ENCODE measurements at regions of chr13 and their contacts with region 1.

Region 1: DNA sequence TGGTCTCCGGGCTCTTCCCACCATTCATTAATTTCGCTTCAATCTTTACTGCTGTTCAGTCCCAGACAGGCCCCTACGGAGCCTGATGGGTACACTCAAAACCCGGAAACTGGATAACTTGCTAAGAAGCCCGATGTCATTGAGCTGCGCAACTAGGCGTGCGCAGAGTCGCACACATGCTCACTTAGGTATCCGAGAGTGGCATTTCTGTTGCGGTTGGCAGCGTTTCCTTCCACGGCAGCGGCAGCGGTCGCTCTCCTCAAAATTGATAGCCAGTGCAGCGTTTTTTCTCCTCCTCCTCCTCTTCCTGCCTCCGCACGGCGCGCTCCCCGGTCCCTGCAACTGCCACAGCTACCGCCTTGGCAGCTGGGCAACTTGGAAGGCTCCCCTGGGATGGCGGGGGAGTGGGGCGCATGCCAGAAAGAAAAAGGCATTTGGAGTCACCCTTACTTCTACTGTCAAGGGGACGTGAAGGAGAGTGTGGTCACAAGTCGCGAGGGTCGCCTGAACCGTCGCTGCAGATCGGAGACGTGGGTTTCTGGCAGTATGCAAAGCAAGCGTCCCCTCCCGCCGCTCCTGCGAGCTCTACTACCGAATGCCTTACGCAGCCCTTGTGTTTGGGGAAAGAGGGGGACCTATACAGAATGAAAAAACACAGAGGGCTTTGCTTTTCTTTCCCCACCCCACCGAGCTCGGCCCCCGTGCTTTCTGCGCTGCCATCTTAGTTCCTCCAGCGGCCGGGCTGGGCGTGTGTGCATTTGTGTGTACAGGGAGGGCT is 2.4 kb upstream of the MYCBP2 start:
- DNase-seq: peak; percentile 93

Region 2: GRCh38 chr13:77460195-77460594 is 130.9 kb after region 1 on chr13:
- intact Hi-C with region 1: no loop called
- DNase-seq: no peak

Region 3: GRCh38 chr13:77477299-77477848 is 148.1 kb after region 1 on chr13:
- intact Hi-C with region 1: loop called (anchors 5 kb)
- DNase-seq: no peak

Measured in cardiac septum (tissue), 1 donor.